ENCODE measurements at regions of chr10 and their contacts with region 1.

Region 1: DNA sequence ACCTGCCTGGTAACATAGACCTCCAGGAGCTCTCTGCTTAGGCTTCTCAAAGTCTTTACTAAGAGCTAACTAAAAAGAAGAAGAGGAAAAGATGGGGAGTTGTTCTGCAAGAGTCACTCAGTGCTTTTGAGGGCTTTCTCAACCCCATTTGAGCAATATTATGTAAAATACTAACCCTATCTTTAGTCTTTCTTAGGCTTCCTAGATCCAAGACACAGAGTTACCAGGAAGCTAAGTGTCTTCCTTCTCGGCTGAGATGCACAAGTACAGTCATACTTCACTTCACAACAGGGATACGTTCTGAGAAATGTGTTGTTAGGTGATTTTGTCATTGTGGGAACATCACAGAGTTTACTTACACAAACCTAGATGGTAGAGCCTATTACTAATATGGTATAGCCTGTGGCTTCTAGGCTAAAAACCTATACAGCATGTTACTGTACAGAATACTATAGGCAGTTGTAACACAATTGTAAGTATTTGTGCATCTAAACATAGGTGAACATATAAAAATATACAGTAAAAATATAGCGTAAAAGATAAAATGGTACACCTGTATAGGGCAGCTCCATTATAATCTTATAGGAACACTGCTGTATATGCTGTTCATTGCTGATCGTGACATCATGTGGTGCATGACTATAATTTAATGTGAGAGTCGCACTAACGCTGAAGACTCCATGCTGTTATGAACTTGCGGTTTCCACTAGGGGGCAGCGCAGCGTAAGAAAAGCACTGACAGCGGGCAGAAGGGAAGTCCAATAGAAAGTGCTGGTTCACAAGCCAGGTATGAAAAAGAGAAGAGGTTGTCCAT is 16.3 kb downstream of the ANKRD22 start:
- DNase-seq: peak; percentile 92
- H3K4me3 Mint-ChIP-seq: no peak overlapping the region
- H3K27ac Mint-ChIP-seq: no peak overlapping the region
- H3K4me1 Mint-ChIP-seq: peaks cover 34% of the 10 kb centered on the region
- H3K27me3 Mint-ChIP-seq: no peaks in the 10 kb centered on the region

Region 2: GRCh38 chr10:88810196-88810961 is 24.9 kb before region 1 on chr10:
- CTCF ChIA-PET with region 1: interaction called, 17 read pairs
- DNase-seq: peak; percentile 43
- H3K4me3 Mint-ChIP-seq: no peak overlapping the region
- H3K27ac Mint-ChIP-seq: no peak overlapping the region
- H3K4me1 Mint-ChIP-seq: peaks cover 22% of the 10 kb centered on the region
- H3K27me3 Mint-ChIP-seq: peaks cover 9% of the 10 kb centered on the region

Region 3: GRCh38 chr10:88851706-88852105 is 16.4 kb after region 1 on chr10 and contains the start of gene ANKRD22:
- CTCF ChIA-PET with region 1: interaction called, 27 read pairs
- DNase-seq: no peak
- H3K4me3 Mint-ChIP-seq: no peak within 1 kb of the TSS
- H3K27ac Mint-ChIP-seq: no peak within 1 kb of the TSS
- H3K4me1 Mint-ChIP-seq: peaks cover 14% of the 10 kb centered on the region
- H3K27me3 Mint-ChIP-seq: no peaks in the 10 kb centered on the region

Region 4: GRCh38 chr10:88880282-88881076 is 45.2 kb after region 1 on chr10:
- CTCF ChIA-PET with region 1: interaction called, 36 read pairs
- DNase-seq: peak; percentile 87
- H3K4me3 Mint-ChIP-seq: peak overlapping the region; percentile 98
- H3K27ac Mint-ChIP-seq: peak overlapping the region; percentile 98
- H3K4me1 Mint-ChIP-seq: peaks cover 75% of the 10 kb centered on the region
- H3K27me3 Mint-ChIP-seq: peaks cover 4% of the 10 kb centered on the region

Region 5: GRCh38 chr10:88901206-88901983 is 66.1 kb after region 1 on chr10:
- CTCF ChIA-PET with region 1: interaction called, 27 read pairs
- DNase-seq: no peak
- H3K4me3 Mint-ChIP-seq: no peak overlapping the region
- H3K27ac Mint-ChIP-seq: peak overlapping the region; percentile 21
- H3K4me1 Mint-ChIP-seq: peaks cover 48% of the 10 kb centered on the region
- H3K27me3 Mint-ChIP-seq: no peaks in the 10 kb centered on the region

Measured in activated naive CD4-positive, alpha-beta T cell treated with anti-CD3 and anti-CD28 coated beads, Interleukin-2, amount 10 ng/mL, durations not matched to agents 7 days and 5 days (primary cell).